ENCODE measurements at regions of chr15 and their contacts with region 1.

Region 1: DNA sequence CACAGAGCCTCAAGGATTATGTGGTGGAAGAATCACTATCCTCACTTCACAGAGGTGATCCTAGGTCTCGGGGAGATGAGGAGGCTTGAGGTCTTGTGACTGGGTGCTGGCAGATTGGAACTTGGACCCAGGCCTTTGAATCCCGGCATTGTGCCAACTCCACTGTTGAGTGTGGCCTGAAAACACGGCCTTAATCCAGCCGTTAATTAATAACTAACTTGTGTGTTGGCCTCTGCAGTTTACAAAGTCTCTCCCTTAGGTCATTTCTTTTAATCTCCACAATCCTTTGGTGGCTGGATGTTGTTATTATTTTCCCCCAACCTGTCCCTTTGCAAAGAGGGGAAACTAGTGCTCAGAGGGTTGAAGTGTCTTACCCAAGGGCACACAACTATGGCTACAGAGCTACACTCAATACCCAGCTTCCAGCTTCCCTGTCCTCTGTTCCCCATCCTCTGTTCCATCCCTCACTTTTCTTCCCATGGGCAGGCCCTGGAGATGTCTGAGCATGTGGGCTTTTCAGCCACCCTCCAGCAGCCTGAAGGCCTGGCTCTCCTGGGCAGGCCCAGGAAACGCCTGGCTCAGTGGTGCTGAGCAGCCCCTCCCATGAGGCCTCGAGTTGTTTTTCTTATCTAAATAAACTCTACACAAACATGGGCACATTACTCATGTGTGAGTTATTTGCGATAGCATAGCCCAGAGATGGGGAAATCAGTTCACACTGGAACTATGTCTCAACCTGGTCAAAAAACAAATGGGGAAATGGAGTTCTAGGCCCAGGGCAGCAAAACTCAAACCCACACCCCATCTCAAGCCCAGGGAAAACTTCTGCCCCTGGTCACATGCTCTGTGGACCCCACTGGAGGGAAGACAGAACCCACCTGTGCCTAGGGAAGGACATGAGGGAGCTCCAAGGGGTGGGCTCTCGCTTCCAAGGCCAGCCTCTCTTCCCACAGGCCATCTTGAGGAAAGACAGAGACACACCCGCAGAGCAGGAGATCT is 16.8 kb upstream of the SMAD3 start:
- DNase-seq: peak; percentile 73 to 93
- H3K4me3 ChIP-seq: no peak overlapping the region
- H3K27ac ChIP-seq: peak overlapping the region; percentile 98
- H3K4me1 ChIP-seq: peaks cover 44% of the 10 kb centered on the region
- H3K27me3 ChIP-seq: no peaks in the 10 kb centered on the region
- CTCF ChIP-seq: no peak

Region 2: DNA sequence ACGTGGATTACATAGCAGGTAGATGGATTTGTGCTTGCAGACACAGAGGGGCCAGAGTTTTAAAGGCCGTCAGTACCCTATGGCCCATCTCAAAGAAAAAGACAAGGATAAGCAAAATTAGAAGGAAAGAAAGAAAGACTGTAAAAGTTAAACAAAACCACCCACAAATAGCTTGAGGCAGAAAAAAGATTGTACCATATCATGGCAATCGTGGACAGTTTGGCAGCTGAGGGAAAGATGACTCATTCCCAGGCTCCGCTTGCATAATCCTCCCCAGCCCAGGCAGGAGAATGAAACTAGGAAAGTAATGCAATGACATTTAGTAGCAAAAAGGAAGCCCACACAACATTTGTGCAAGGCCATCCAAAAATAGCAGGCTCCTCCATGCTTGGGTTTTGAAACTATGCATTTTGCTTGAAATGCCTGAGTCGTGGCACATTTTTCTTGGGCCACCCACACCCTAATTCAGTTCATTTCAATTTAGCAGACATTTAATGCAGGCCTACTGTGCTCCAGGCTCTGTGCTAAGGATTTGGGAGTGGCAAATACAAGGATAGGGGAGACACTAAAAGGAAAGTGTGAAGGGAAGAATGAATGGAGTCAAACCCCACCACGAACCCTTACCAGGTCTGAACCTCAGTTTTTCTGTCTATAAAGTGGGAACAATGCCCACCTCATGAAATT is 24.1 kb before region 1 on chr15:
- CTCF ChIA-PET with region 1: no interaction called
- POLR2A ChIA-PET with region 1: no interaction called
- intact Hi-C with region 1: loop called (anchors 2 kb)
- DNase-seq: peak; percentile 75 to 83
- H3K4me3 ChIP-seq: no peak overlapping the region
- H3K27ac ChIP-seq: peak overlapping the region; percentile 82
- H3K4me1 ChIP-seq: peaks cover 65% of the 10 kb centered on the region
- H3K27me3 ChIP-seq: no peaks in the 10 kb centered on the region
- CTCF ChIP-seq: no peak

Region 3: GRCh38 chr15:67091071-67091979 is 42.7 kb after region 1 on chr15:
- CTCF ChIA-PET with region 1: no interaction called
- POLR2A ChIA-PET with region 1: no interaction called
- intact Hi-C with region 1: loop called (anchors 2 kb)
- DNase-seq: peak; percentile 95
- H3K4me3 ChIP-seq: peak overlapping the region; percentile 39; the same call in 1 of the 2 replicates
- H3K27ac ChIP-seq: peak overlapping the region; percentile 96
- H3K4me1 ChIP-seq: peaks cover 74% of the 10 kb centered on the region
- H3K27me3 ChIP-seq: no peaks in the 10 kb centered on the region
- CTCF ChIP-seq: no peak

Region 4: GRCh38 chr15:67150028-67150860 is 101.7 kb after region 1 on chr15:
- CTCF ChIA-PET with region 1: no interaction called
- POLR2A ChIA-PET with region 1: interaction called, 5 read pairs
- intact Hi-C with region 1: loop called (anchors 1 kb)
- DNase-seq: peak; percentile 90 to 97
- H3K4me3 ChIP-seq: peak overlapping the region; percentile 42; the same call in 1 of the 2 replicates
- H3K27ac ChIP-seq: peak overlapping the region; percentile 96
- H3K4me1 ChIP-seq: peaks cover 77% of the 10 kb centered on the region
- H3K27me3 ChIP-seq: no peaks in the 10 kb centered on the region
- CTCF ChIP-seq: no peak

Region 5: GRCh38 chr15:67303490-67304363 is 255.1 kb after region 1 on chr15:
- CTCF ChIA-PET with region 1: no interaction called
- POLR2A ChIA-PET with region 1: no interaction called
- intact Hi-C with region 1: no loop called
- DNase-seq: no peak
- H3K4me3 ChIP-seq: no peak overlapping the region
- H3K27ac ChIP-seq: no peak overlapping the region
- H3K4me1 ChIP-seq: no peaks in the 10 kb centered on the region
- H3K27me3 ChIP-seq: no peaks in the 10 kb centered on the region
- CTCF ChIP-seq: peak; percentile 66

Region 6: DNA sequence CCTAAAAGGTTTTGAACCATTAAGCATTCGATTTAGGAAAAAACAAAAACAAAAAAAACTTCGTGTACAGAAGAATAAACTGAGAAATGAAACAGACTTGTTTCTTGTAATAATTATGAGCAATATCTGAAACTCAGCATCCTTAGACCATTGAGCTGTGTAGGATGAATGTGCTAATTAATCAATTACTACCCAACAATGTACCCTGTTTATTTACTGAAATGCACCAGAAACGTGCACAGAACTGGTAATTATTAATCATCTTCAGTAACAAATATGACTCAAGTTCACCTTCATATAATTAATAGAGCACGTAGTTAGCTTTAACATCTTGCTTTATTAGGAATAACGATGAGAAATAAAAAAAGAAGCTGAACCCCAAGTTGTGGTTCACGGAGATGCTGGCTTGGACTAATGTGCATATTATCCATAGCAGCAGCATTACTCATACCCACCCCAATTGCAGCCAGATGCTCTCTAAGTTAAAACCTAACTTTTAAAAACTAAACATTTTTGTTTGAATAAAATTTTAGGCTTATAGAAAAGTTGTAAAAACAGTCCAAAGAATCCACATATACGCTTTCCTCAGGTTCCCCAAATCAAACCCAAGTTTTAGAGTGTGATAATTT is 462.1 kb after region 1 on chr15:
- CTCF ChIA-PET with region 1: no interaction called
- POLR2A ChIA-PET with region 1: no interaction called
- intact Hi-C with region 1: no loop called
- DNase-seq: no peak
- H3K4me3 ChIP-seq: no peak overlapping the region
- H3K27ac ChIP-seq: no peak overlapping the region
- H3K4me1 ChIP-seq: no peaks in the 10 kb centered on the region
- H3K27me3 ChIP-seq: no peaks in the 10 kb centered on the region
- CTCF ChIP-seq: no peak